Activated CD4-positive, alpha-beta T cell treated with anti-CD3 and anti-CD28 coated beads for 36 hours (primary cell): ENCODE measurements at regions of chr5 and their contacts with region 1.

Region 1: DNA sequence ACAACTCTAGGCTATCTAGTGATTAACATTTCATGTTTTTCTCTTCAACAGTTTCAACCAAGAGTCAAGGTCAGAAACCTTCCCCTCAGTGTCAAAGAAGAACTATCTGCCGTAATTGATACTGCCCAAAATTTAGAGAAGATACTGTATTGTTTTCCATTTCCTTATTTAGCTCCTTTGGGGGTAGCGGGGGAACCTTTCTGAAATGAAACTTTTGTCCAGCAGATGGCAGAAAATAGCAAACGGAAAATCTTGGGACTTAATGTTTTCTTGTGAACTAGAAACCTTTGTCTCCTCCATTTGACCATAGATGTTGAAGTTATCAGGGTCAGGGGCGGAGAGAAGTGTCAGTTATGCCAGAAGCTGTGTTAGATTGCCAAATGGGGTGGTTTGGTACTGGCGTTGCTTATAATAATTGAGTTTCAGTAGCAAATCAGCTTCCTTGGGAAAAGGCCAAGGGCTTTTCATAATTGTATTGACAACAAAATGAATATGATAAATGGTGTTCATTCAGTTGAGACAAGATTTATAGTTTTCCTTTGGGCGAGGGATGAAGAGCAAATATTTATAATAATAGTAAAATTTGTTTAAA is 101.7 kb upstream of the TLX3 start:
- DNase-seq: peak; percentile 16
- ATAC-seq: no peak
- H3K4me3 Mint-ChIP-seq: no peak overlapping the region
- H3K27ac Mint-ChIP-seq: no peak overlapping the region
- H3K4me1 Mint-ChIP-seq: no peaks in the 10 kb centered on the region
- H3K27me3 Mint-ChIP-seq: peaks cover 8% of the 10 kb centered on the region

Region 2: GRCh38 chr5:170638454-170639220 is 568.7 kb before region 1 on chr5:
- CTCF ChIA-PET with region 1: no interaction called
- POLR2A ChIA-PET with region 1: no interaction called
- intact Hi-C with region 1: loop called in 1 of 2 experiments (anchors 5 kb)
- DNase-seq: peak; percentile 84
- ATAC-seq: peak; percentile 74
- H3K4me3 Mint-ChIP-seq: no peak overlapping the region
- H3K27ac Mint-ChIP-seq: no peak overlapping the region
- H3K4me1 Mint-ChIP-seq: peaks cover 7% of the 10 kb centered on the region
- H3K27me3 Mint-ChIP-seq: peaks cover 8% of the 10 kb centered on the region

Region 3: GRCh38 chr5:171264843-171265242 is 57.5 kb after region 1 on chr5:
- CTCF ChIA-PET with region 1: no interaction called
- POLR2A ChIA-PET with region 1: no interaction called
- intact Hi-C with region 1: no loop called
- DNase-seq: no peak
- ATAC-seq: no peak
- H3K4me3 Mint-ChIP-seq: no peak overlapping the region
- H3K27ac Mint-ChIP-seq: no peak overlapping the region
- H3K4me1 Mint-ChIP-seq: peaks cover 9% of the 10 kb centered on the region
- H3K27me3 Mint-ChIP-seq: peaks cover 2% of the 10 kb centered on the region

Region 4: DNA sequence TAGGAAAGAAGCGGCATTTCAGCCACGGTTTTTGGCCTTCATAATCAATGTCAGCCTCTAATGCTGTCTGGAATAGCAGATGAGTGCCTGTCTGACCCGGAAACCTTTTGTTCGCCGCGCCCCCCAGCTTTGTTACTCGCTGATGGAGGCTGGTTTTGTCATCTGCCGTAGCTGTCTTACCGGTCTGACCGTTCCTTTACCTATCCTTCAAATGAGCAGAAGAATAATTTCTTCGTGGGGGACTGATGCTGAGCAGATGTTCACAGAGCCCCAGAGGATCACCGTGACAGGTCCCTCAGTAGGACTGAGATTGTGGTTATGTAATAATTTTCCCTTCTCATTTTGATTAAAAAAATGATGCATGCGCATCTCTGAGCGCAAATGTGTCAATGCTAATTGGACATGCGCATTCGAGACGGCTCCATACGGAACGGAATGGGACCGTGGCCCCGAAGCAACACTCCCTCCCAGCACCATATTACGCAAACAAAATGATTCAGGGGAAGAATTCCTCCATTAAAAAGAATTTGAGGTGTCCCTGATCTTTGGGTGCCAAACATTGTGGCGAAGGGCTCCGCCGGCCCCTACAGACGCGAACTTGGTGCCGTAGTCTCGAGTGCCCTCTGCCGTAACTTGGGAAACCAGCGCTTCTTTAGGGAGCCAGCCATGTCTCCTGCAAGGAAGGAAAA is 129.3 kb after region 1 on chr5:
- CTCF ChIA-PET with region 1: interaction called, 19 read pairs
- POLR2A ChIA-PET with region 1: no interaction called
- intact Hi-C with region 1: loop called in 1 of 2 experiments (anchors 1 kb)
- DNase-seq: peak; percentile 60
- ATAC-seq: peak; percentile 61
- H3K4me3 Mint-ChIP-seq: peak overlapping the region; percentile 39
- H3K27ac Mint-ChIP-seq: no peak overlapping the region
- H3K4me1 Mint-ChIP-seq: peaks cover 3% of the 10 kb centered on the region
- H3K27me3 Mint-ChIP-seq: peaks cover 26% of the 10 kb centered on the region

Region 5: GRCh38 chr5:171342362-171343111 is 135.2 kb after region 1 on chr5:
- CTCF ChIA-PET with region 1: interaction called, 19 read pairs
- POLR2A ChIA-PET with region 1: no interaction called
- intact Hi-C with region 1: loop called (anchors 1 kb)
- DNase-seq: peak; percentile 63
- ATAC-seq: peak; percentile 72
- H3K4me3 Mint-ChIP-seq: no peak overlapping the region
- H3K27ac Mint-ChIP-seq: no peak overlapping the region
- H3K4me1 Mint-ChIP-seq: no peaks in the 10 kb centered on the region
- H3K27me3 Mint-ChIP-seq: peaks cover 7% of the 10 kb centered on the region